ENCODE measurements at regions of chr11 and their contacts with region 1.

Region 1: GRCh38 chr11:47499614-47500013 is 50.7 kb upstream of the RAPSN start:
- DNase-seq: no peak
- ATAC-seq: no peak
- H3K4me3 ChIP-seq: no peak overlapping the region
- H3K27ac ChIP-seq: no peak overlapping the region
- H3K4me1 ChIP-seq: peaks cover 4 to 10% of the 10 kb centered on the region in 2 experiments; a peak in 3 of 5 replicates
- H3K27me3 ChIP-seq: no peaks in the 10 kb centered on the region
- CTCF ChIP-seq: no peak
- EP300 ChIP-seq: no peak
- POLR2A ChIP-seq: no peak
- RAD21 ChIP-seq: no peak

Region 2: DNA sequence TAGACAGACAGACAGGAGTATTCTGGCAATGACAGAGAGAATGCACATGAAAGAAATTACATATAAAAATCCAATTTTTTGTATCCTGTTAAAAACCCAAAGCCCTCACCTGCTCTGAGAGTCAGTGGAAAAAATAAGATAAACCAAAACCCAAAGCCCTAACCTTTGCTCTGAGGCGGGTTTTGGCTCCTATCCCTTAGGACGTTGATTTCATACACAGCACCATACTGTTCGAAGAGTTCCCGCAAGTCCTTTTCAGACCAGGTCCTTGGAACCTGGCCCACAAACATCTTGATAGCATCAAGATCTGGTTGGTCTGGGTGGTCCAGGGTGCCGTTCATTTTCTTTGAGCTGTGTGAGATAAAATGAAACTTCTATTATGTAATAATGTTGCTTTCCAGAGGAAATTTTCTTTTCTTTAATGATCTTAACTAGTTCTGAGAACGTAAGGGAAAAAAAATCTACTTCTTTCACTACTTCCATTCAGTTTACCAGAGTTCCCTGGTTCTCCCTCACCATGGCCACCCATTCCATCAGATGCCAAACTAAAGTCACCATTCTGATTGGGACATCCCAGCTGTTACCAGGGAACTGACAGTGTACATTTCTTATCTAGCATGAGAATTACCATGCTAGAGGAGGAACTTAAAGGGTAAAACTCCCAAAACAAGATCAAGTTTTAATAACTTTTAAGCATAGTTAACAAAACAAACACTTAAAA is 10.8 kb before region 1 on chr11:
- CTCF ChIA-PET with region 1: no interaction called
- POLR2A ChIA-PET with region 1: interaction called, 14 read pairs
- in situ Hi-C with region 1: no loop called
- intact Hi-C with region 1: no loop called
- DNase-seq: no peak
- ATAC-seq: peak; percentile 39
- H3K4me3 ChIP-seq: no peak overlapping the region
- H3K27ac ChIP-seq: peak overlapping the region; percentile 42; the same call in 1 of the 3 replicates
- H3K4me1 ChIP-seq: peaks cover 0 to 13% of the 10 kb centered on the region in 2 experiments; a peak in 2 of 5 replicates
- H3K27me3 ChIP-seq: no peaks in the 10 kb centered on the region
- CTCF ChIP-seq: no peak
- EP300 ChIP-seq: no peak
- POLR2A ChIP-seq: no peak
- RAD21 ChIP-seq: no peak

Measured in K562 (cell line).